ENCODE measurements at regions of chr12 and their contacts with region 1.

Region 1: GRCh38 chr12:120580787-120581723 is at the start of gene POP5:
- DNase-seq: peak; percentile 84
- ATAC-seq: peak; percentile 97
- H3K4me3 Mint-ChIP-seq: peak within 1 kb of the TSS; percentile 98
- H3K27ac Mint-ChIP-seq: peak within 1 kb of the TSS; percentile 86
- H3K4me1 Mint-ChIP-seq: peaks cover 38% of the 10 kb centered on the region
- H3K27me3 Mint-ChIP-seq: peaks cover 10% of the 10 kb centered on the region
- CTCF ChIP-seq: no peak
- total RNA-seq, gene POP5: 77.5 and 78.4 TPM in 2 replicates

Region 2: DNA sequence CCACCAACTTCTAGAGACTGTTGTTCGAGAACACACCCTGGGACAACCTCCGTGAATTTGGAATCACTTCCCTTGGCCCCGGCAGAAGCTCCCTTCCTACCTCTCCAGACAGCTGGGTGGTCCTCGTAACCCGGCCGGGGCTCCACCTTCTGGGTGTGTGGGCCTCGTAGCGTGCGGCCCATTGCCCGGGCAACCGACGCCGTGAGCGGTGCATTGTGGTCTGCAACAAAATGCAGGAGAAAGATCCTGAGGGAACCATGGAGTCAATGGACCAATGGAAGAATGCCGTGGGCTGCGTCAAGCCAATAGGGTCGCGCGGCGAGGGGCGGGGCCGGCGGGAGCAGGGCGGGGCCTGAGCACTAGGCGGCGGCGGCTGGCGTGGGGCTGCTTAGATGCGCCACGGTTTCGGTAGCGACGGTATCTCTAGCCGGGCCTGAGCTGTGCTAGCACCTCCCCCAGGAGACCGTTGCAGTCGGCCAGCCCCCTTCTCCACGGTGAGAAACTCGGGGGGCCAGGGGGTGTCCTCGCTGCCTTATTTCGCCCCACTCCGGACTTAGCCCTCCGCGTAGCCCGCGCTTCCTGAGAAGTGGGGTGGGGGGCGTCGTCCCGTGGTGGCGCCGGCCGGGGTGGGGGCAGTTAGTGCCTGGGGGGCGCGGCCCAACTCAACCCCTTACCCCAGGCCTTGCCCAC is 85.2 kb before region 1 on chr12 and contains the start of gene DYNLL1:
- CTCF ChIA-PET with region 1: no interaction called
- POLR2A ChIA-PET with region 1: interaction called, 3 read pairs
- intact Hi-C with region 1: loop called (anchors 1 kb)
- DNase-seq: peak; percentile 99
- ATAC-seq: peak; percentile 96
- H3K4me3 Mint-ChIP-seq: peak within 1 kb of the TSS; percentile 96
- H3K27ac Mint-ChIP-seq: peak within 1 kb of the TSS; percentile 91
- H3K4me1 Mint-ChIP-seq: peaks cover 29% of the 10 kb centered on the region
- H3K27me3 Mint-ChIP-seq: no peaks in the 10 kb centered on the region
- CTCF ChIP-seq: no peak
- total RNA-seq, gene DYNLL1: 159 and 180 TPM in 2 replicates

Region 3: DNA sequence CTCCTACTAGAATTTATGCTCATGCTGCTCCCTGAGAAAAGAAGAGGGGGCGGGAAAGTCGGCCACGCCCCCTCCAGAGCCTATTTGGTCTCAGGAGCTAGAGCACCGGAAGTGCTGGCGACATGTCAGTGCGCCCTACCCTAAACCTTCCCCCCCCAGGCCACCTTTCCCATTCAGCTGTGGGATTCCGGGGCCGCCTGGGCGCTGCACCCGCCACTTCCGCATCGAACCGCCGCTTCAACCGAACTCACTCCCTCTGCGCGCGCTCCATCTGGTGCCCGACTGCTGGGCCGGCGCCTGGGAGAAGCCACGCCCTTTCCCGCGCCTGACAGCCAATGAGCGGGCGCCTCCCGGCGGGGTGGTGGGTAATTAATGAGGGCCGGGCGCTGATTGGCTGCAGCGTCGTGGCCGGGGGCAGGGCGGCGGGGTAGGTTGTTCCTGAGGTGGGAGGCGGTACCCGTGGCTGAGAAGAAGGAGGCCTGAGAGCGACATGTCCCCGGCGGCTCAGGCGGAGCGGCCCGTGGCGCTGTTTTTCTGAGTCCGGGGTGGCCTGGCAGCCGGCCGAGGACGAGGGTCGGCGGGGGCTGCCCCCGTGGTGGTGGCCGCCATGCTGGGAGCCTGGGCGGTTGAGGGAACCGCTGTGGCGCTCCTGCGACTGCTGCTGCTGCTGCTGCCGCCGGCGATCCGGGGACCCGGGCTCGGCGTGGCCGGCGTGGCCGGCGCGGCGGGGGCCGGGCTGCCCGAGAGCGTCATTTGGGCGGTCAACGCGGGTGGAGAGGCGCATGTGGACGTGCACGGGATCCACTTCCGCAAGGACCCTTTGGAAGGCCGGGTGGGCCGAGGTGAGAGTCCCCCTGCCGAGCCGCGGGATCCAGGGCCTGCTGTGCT is 105.9 kb after region 1 on chr12 and contains the start of gene MLEC:
- CTCF ChIA-PET with region 1: interaction called, 4 read pairs
- POLR2A ChIA-PET with region 1: no interaction called
- intact Hi-C with region 1: loop called (anchors 1 kb)
- DNase-seq: peak; percentile 98
- ATAC-seq: peak; percentile 77
- H3K4me3 Mint-ChIP-seq: peak within 1 kb of the TSS; percentile 91
- H3K27ac Mint-ChIP-seq: peak within 1 kb of the TSS; percentile 97
- H3K4me1 Mint-ChIP-seq: peaks cover 43% of the 10 kb centered on the region
- H3K27me3 Mint-ChIP-seq: no peaks in the 10 kb centered on the region
- CTCF ChIP-seq: no peak
- total RNA-seq, gene MLEC: 60.6 and 69.6 TPM in 2 replicates

Region 4: GRCh38 chr12:120904197-120904773 is 323.2 kb after region 1 on chr12 and contains the start of gene SPPL3:
- CTCF ChIA-PET with region 1: no interaction called
- POLR2A ChIA-PET with region 1: no interaction called
- intact Hi-C with region 1: loop called (anchors 5 kb)
- DNase-seq: peak; percentile 96
- ATAC-seq: peak; percentile 80
- H3K4me3 Mint-ChIP-seq: peak within 1 kb of the TSS; percentile 97
- H3K27ac Mint-ChIP-seq: peak within 1 kb of the TSS; percentile 91
- H3K4me1 Mint-ChIP-seq: peaks cover 30% of the 10 kb centered on the region
- H3K27me3 Mint-ChIP-seq: no peaks in the 10 kb centered on the region
- CTCF ChIP-seq: no peak
- total RNA-seq, gene SPPL3: 39.9 and 40.3 TPM in 2 replicates

Region 5: GRCh38 chr12:121110211-121110940 is 529.3 kb after region 1 on chr12:
- CTCF ChIA-PET with region 1: interaction called, 6 read pairs
- POLR2A ChIA-PET with region 1: interaction called, 3 read pairs
- intact Hi-C with region 1: loop called (anchors 1 kb)
- DNase-seq: peak; percentile 31
- ATAC-seq: peak; percentile 89
- H3K4me3 Mint-ChIP-seq: no peak overlapping the region
- H3K27ac Mint-ChIP-seq: no peak overlapping the region
- H3K4me1 Mint-ChIP-seq: peaks cover 4% of the 10 kb centered on the region
- H3K27me3 Mint-ChIP-seq: no peaks in the 10 kb centered on the region
- CTCF ChIP-seq: peak; percentile 50